ENCODE measurements at regions of chr14 and their contacts with region 1.

Region 1: GRCh38 chr14:73173092-73173735 is 36.9 kb downstream of the PSEN1 start:
- DNase-seq: peak; percentile 31
- CTCF ChIP-seq: peak; percentile 49

Region 2: GRCh38 chr14:73463411-73463810 is 290.2 kb after region 1 on chr14:
- CTCF ChIA-PET with region 1: interaction called, 13 read pairs
- POLR2A ChIA-PET with region 1: no interaction called
- DNase-seq: no peak
- CTCF ChIP-seq: no peak